Caco-2 (cell line): ENCODE measurements at regions of chr11 and their contacts with region 1.

Region 1: GRCh38 chr11:76782526-76783293 is 446 bp upstream of the TSKU start:
- DNase-seq: peak; percentile 98
- H3K4me3 ChIP-seq: peak overlapping the region; percentile 85
- H3K4me3 Mint-ChIP-seq: peak overlapping the region; percentile 79
- H3K27ac Mint-ChIP-seq: peak overlapping the region; percentile 71
- H3K4me1 ChIP-seq: peaks cover 31% of the 10 kb centered on the region
- H3K4me1 Mint-ChIP-seq: peaks cover 46% of the 10 kb centered on the region
- H3K27me3 ChIP-seq: no peaks in the 10 kb centered on the region
- H3K27me3 Mint-ChIP-seq: no peaks in the 10 kb centered on the region
- CTCF ChIP-seq: no peak

Region 2: GRCh38 chr11:76768088-76768908 is 14.4 kb before region 1 on chr11:
- CTCF ChIA-PET with region 1: interaction called, 5 read pairs
- POLR2A ChIA-PET with region 1: interaction called, 8 read pairs
- intact Hi-C with region 1: loop called (anchors 1 kb)
- DNase-seq: no peak
- H3K4me3 ChIP-seq: no peak overlapping the region
- H3K4me3 Mint-ChIP-seq: no peak overlapping the region
- H3K27ac Mint-ChIP-seq: peak overlapping the region; percentile 22
- H3K4me1 ChIP-seq: peaks cover 51% of the 10 kb centered on the region
- H3K4me1 Mint-ChIP-seq: peaks cover 46% of the 10 kb centered on the region
- H3K27me3 ChIP-seq: no peaks in the 10 kb centered on the region
- H3K27me3 Mint-ChIP-seq: no peaks in the 10 kb centered on the region
- CTCF ChIP-seq: no peak

Region 3: DNA sequence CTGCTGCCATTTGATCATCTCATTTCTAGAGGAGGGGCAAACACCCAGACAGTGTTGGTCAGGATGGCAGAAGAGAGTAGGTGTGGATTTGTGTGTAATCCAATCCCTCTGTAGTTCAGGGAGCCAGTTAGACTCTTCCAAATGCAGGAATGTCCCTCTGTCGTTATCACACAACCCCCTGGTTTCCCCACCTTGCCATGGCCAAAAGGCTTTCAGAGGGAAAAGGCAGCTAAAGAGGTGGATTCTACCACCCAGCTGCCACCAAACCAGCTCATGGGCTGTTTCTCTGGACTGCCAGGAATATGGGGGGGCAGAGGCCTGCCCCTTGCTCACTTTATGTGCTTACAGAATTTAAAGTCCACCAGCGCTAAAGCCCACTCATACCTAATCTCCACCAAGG is 18.5 kb after region 1 on chr11:
- CTCF ChIA-PET with region 1: interaction called, 3 read pairs
- POLR2A ChIA-PET with region 1: no interaction called
- intact Hi-C with region 1: loop called (anchors 1 kb)
- DNase-seq: no peak
- H3K4me3 ChIP-seq: no peak overlapping the region
- H3K4me3 Mint-ChIP-seq: no peak overlapping the region
- H3K27ac Mint-ChIP-seq: no peak overlapping the region
- H3K4me1 ChIP-seq: peaks cover 23% of the 10 kb centered on the region
- H3K4me1 Mint-ChIP-seq: peaks cover 7% of the 10 kb centered on the region
- H3K27me3 ChIP-seq: no peaks in the 10 kb centered on the region
- H3K27me3 Mint-ChIP-seq: no peaks in the 10 kb centered on the region
- CTCF ChIP-seq: no peak

Region 4: DNA sequence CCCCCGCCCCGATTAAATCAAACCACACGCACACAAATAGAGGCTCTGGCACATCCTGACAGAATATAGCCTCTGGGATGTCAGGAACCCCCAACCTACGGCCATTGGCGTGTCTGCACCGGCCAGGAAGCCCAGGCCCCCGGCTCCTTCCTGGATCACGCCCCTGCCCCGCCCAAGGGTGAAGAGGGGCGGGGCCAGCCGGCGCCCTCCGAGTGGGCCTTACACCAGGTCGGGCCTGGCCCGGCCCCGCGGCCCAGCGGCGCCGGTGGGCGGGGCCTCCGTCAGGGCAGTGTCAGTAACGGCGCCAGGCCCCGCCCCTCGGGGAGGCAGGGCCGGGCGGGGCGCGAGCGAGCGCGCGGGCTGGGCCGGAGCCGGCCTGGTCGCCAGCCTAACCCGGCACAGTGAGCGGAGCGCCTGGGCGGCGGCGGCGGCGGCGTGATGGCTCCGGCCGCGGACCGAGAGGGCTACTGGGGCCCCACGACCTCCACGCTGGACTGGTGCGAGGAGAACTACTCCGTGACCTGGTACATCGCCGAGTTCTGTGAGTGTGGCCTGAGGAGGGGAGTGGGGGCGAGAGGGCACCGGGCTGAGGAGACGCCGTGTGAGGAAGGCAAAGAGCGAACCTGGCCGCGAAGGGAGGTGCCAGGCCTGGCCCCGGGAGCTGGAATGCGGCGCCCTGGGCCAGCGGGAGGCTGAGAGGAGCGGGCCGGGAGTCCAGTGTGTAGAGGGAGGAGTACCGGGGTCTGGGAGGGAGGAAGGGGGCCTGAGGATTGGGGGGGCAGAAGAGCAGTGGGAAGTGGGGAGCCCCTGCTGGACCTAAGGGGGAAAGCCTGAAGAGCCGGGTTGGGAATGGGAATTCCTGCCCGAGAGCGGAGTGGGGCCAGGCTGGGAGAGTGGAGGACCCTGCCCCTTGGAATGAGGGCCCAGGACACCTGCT is 78.1 kb after region 1 on chr11 and contains the start of gene ACER3:
- CTCF ChIA-PET with region 1: no interaction called
- POLR2A ChIA-PET with region 1: no interaction called
- intact Hi-C with region 1: loop called (anchors 2 kb)
- DNase-seq: peak; percentile 95 to 99
- H3K4me3 ChIP-seq: peak within 1 kb of the TSS; percentile 73
- H3K4me3 Mint-ChIP-seq: peak within 1 kb of the TSS; percentile 94
- H3K27ac Mint-ChIP-seq: peak within 1 kb of the TSS; percentile 85
- H3K4me1 ChIP-seq: peaks cover 27% of the 10 kb centered on the region
- H3K4me1 Mint-ChIP-seq: peaks cover 35% of the 10 kb centered on the region
- H3K27me3 ChIP-seq: no peaks in the 10 kb centered on the region
- H3K27me3 Mint-ChIP-seq: no peaks in the 10 kb centered on the region
- CTCF ChIP-seq: peak in 1 of 2 experiments; percentile 72
- total RNA-seq, gene ACER3: 37.5 and 40.6 TPM in 2 replicates